Activated naive CD8-positive, alpha-beta T cell treated with anti-CD3 and anti-CD28 coated beads, Interleukin-2, amount 10 ng/mL, durations not matched to agents 7 days and 5 days (primary cell): ENCODE measurements at regions of chr1 and their contacts with region 1.

Region 1: GRCh38 chr1:59046730-59047157 is 250.2 kb upstream of the FGGY start:
- DNase-seq: peak; percentile 53
- ATAC-seq: peak; percentile 92
- H3K4me3 Mint-ChIP-seq: peak overlapping the region; percentile 54
- H3K27ac Mint-ChIP-seq: peak overlapping the region; percentile 93
- H3K4me1 Mint-ChIP-seq: peaks cover 36% of the 10 kb centered on the region
- H3K27me3 Mint-ChIP-seq: no peaks in the 10 kb centered on the region

Region 2: GRCh38 chr1:59020151-59020997 is 26.4 kb before region 1 on chr1:
- POLR2A ChIA-PET with region 1: interaction called, 10 read pairs
- DNase-seq: peak; percentile 39
- ATAC-seq: peak; percentile 97
- H3K4me3 Mint-ChIP-seq: peak overlapping the region; percentile 65
- H3K27ac Mint-ChIP-seq: peak overlapping the region; percentile 91
- H3K4me1 Mint-ChIP-seq: peaks cover 21% of the 10 kb centered on the region
- H3K27me3 Mint-ChIP-seq: no peaks in the 10 kb centered on the region

Region 3: GRCh38 chr1:59128784-59129227 is 82.1 kb after region 1 on chr1:
- POLR2A ChIA-PET with region 1: no interaction called
- DNase-seq: no peak
- ATAC-seq: no peak
- H3K4me3 Mint-ChIP-seq: no peak overlapping the region
- H3K27ac Mint-ChIP-seq: no peak overlapping the region
- H3K4me1 Mint-ChIP-seq: peaks cover 8% of the 10 kb centered on the region
- H3K27me3 Mint-ChIP-seq: peaks cover 8% of the 10 kb centered on the region